ENCODE measurements at regions of chr19 and their contacts with region 1.

Region 1: DNA sequence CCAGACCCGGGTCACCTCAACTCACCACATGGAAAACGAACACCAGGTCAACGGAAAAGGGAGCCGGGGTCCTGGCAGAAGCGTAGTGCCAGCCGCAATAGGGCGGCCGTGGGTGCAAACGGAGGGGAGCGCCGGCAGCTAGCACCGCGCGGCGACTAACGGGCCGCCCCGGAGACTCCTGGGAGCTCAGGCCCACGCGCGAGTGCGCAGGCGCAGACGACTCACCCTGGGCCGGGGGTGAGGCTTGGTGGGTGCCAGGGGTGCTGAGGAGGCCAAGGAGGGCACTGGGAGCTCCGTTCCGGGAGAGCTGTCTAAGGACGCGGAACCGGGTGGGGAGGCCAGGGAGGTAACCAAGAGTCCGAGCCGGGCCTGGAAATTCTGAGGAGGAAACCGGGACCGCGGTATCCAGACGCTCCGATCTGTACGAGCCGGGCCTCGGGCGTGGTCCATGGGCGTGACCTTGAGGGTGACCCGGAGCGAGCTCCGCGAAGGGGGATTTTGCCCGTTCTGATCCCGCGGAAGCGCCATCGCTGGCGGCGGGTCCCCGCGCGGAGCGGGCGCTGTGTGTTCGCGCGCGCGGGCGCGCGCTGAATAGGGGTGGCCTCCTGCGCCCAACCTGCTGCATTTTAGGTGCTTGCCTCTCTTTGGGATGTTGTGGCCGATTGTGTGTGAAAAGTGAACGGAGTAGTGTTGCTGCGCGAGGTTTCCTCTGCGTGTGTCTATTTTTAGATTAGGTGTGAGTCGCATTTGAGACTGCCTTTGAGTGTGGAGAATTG is at the start of gene ZNF382:
- DNase-seq: peak; percentile 88
- H3K4me3 Mint-ChIP-seq: peak within 1 kb of the TSS; percentile 80
- H3K27ac Mint-ChIP-seq: peak within 1 kb of the TSS; percentile 88
- H3K4me1 Mint-ChIP-seq: peaks cover 22% of the 10 kb centered on the region
- H3K27me3 Mint-ChIP-seq: no peaks in the 10 kb centered on the region
- total RNA-seq, gene ZNF382: 11.8 to 13.5 TPM

Region 2: GRCh38 chr19:36489118-36489919 is 116.0 kb before region 1 on chr19 and contains the start of gene ZNF566:
- CTCF ChIA-PET with region 1: interaction called, 4 read pairs
- POLR2A ChIA-PET with region 1: interaction called, 18 read pairs
- DNase-seq: peak; percentile 92
- H3K4me3 Mint-ChIP-seq: peak within 1 kb of the TSS; percentile 95
- H3K27ac Mint-ChIP-seq: peak within 1 kb of the TSS; percentile 97
- H3K4me1 Mint-ChIP-seq: peaks cover 26% of the 10 kb centered on the region
- H3K27me3 Mint-ChIP-seq: no peaks in the 10 kb centered on the region
- total RNA-seq, gene ZNF566: 8.5 to 8.7 TPM

Region 3: DNA sequence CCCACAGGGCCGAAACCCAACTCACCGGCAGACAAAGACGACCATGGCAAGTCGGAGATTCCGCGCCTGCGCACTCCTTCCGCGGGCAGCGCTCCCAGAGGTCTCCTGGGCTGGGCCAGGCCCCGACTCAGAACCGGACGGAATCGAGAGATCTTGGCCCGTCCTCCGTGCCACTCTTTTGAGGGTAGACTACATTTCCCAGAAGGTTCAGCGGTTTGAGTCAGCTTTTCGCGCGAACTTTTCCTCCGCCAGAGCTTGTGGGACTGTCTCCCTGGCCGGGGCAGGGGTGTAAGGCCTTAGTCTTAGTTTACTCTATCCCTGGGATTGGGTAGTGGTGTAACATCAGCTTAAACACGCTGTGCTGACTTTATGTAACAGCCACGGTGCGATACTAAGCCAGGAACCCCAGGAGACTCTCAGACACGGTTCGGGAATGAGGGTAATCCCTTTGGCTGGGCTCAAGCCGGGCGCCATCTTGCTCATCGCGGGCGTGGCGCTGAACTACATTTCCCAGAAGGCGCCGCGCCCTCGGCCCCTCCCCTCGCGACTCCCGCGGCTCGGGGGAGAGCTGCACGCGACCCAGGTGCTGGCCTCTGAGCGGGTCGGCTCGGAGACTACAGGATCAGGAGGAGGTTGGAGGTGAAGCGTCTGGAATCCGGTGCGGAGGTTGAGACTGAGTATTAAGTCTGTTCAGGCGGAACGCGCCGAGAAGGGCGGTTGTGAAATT is 76.9 kb before region 1 on chr19 and contains the start of gene ZNF260:
- CTCF ChIA-PET with region 1: interaction called, 3 read pairs
- POLR2A ChIA-PET with region 1: interaction called, 26 read pairs
- DNase-seq: peak; percentile 91
- H3K4me3 Mint-ChIP-seq: peak within 1 kb of the TSS; percentile 94
- H3K27ac Mint-ChIP-seq: peak within 1 kb of the TSS; percentile 91
- H3K4me1 Mint-ChIP-seq: peaks cover 23% of the 10 kb centered on the region
- H3K27me3 Mint-ChIP-seq: no peaks in the 10 kb centered on the region
- total RNA-seq, gene ZNF260: 9.0 to 9.9 TPM

Region 4: DNA sequence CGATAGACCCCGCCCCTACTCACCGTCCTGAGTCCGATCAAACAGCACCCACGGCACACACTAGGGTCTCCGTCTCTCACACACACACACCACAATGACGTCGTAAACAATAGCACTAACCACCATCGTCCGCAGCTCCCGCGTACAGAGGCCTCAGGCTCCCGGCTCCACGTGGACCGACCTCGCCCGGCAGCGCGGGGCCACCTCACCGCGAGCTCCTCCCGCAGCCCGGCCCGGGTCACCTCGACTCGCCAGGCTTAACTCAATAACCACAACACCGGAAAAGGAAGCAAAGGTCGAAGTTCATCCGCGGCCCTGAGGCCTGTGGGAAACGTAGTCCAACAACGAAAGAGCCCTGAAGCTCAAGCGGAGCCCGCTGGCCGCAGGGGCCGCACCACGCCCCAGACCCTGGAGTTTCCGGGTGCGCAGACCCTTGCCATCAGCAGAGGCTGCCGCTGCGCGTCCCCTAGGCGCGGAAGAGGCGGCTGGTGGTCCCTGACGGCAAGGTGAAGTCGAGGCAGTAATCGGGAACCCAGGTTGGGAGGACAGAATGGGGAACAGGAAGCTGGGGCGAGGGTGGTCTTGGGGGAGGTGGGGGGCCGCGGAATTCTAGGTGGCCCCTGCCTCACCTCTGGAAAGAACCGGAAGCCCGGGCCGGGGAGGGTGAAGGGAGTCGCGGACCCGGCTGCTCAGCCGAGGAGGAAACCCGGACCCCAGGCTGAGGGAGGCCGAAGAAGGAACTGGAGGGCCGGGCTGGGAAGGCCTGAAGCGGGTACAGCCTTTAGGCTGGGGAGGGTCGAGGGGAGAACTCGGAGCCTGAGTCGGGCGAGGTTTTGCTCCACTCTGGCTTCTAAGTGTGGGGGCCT is 32.0 kb before region 1 on chr19 and contains the start of gene ZNF529:
- CTCF ChIA-PET with region 1: no interaction called
- POLR2A ChIA-PET with region 1: interaction called, 29 read pairs
- DNase-seq: peak; percentile 90
- H3K4me3 Mint-ChIP-seq: peak within 1 kb of the TSS; percentile 87
- H3K27ac Mint-ChIP-seq: peak within 1 kb of the TSS; percentile 90
- H3K4me1 Mint-ChIP-seq: peaks cover 33% of the 10 kb centered on the region
- H3K27me3 Mint-ChIP-seq: no peaks in the 10 kb centered on the region
- total RNA-seq, gene ZNF529: 11.1 to 14.6 TPM

Region 5: GRCh38 chr19:36772311-36773222 is 167.3 kb after region 1 on chr19 and contains the start of gene ZNF850:
- CTCF ChIA-PET with region 1: no interaction called
- POLR2A ChIA-PET with region 1: interaction called, 10 read pairs
- DNase-seq: peak; percentile 94
- H3K4me3 Mint-ChIP-seq: peak within 1 kb of the TSS; percentile 98
- H3K27ac Mint-ChIP-seq: peak within 1 kb of the TSS; percentile 92
- H3K4me1 Mint-ChIP-seq: peaks cover 24% of the 10 kb centered on the region
- H3K27me3 Mint-ChIP-seq: no peaks in the 10 kb centered on the region
- total RNA-seq, gene ZNF850: 5.0 to 6.0 TPM

Region 6: GRCh38 chr19:36850559-36851442 is 245.5 kb after region 1 on chr19 and contains the start of gene ZNF345:
- CTCF ChIA-PET with region 1: interaction called, 3 read pairs
- POLR2A ChIA-PET with region 1: interaction called, 13 read pairs
- DNase-seq: peak; percentile 89
- H3K4me3 Mint-ChIP-seq: no peak within 1 kb of the TSS
- H3K27ac Mint-ChIP-seq: no peak within 1 kb of the TSS
- H3K4me1 Mint-ChIP-seq: peaks cover 6% of the 10 kb centered on the region
- H3K27me3 Mint-ChIP-seq: no peaks in the 10 kb centered on the region
- total RNA-seq, gene ZNF345: 6.0 to 6.3 TPM